ENCODE measurements at regions of chr2 and their contacts with region 1.

Region 1: DNA sequence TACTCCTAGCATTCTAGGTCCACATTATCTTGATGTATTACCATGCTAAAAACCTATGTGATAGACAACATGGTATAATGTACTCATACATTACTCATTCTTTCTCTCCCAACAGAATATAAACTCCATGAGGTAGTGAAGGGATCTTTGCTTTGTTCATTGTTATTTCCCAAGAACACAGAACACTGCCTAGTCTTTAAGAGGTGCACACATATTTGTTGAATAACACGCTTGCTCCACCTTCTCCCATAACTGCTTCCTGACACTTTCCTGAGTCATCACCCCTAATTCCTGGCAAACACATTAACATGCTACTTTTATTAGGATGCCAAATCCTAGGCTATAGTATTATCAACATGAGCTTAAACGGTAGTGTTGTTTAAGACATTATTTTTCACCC is 41.3 kb downstream of the REV1 start:
- DNase-seq: peak; percentile 81
- H3K4me3 ChIP-seq: no peak overlapping the region
- H3K27ac ChIP-seq: peak overlapping the region; percentile 13
- H3K4me1 ChIP-seq: peaks cover 12% of the 10 kb centered on the region
- H3K27me3 ChIP-seq: no peaks in the 10 kb centered on the region
- CTCF ChIP-seq: no peak
- POLR2A ChIP-seq: no peak

Region 2: GRCh38 chr2:99028558-99028957 is 420.0 kb before region 1 on chr2:
- CTCF ChIA-PET with region 1: no interaction called
- POLR2A ChIA-PET with region 1: no interaction called
- dilution Hi-C with region 1: no loop called
- intact Hi-C with region 1: no loop called
- DNase-seq: no peak
- H3K4me3 ChIP-seq: no peak overlapping the region
- H3K27ac ChIP-seq: no peak overlapping the region
- H3K4me1 ChIP-seq: no peaks in the 10 kb centered on the region
- H3K27me3 ChIP-seq: peaks cover 2% of the 10 kb centered on the region in 2 experiments
- CTCF ChIP-seq: no peak
- POLR2A ChIP-seq: no peak

Region 3: DNA sequence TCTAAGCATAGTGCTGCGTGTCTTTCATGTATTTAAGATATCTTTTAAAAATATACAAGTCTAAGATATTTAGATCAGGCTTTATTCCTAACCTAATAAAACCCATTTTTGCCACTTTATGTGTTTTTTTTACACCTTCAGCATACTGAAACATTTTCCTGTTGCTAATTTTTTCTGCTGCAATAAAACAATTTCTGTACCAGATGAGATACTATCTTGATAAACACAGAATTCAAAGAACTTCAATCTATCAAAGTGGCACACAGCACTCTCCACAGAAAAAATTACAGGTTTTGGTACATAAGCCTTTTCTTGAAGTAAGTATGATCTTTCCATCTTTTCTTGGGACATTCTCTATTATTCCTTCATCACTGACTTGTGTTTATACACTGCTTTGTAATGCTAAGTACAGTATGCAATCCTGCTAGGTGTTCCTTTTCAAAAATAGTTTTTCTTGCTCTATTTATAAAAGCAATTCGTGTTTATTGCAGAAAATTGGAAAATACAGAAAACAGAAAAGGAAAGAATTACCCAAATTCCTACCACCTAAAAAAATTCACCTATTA is 25.0 kb after region 1 on chr2:
- CTCF ChIA-PET with region 1: no interaction called
- POLR2A ChIA-PET with region 1: no interaction called
- dilution Hi-C with region 1: no loop called
- intact Hi-C with region 1: loop called (anchors 2 kb)
- DNase-seq: peak; percentile 36
- H3K4me3 ChIP-seq: no peak overlapping the region
- H3K27ac ChIP-seq: no peak overlapping the region
- H3K4me1 ChIP-seq: peaks cover 28% of the 10 kb centered on the region
- H3K27me3 ChIP-seq: no peaks in the 10 kb centered on the region
- CTCF ChIP-seq: no peak
- POLR2A ChIP-seq: no peak

Measured in endothelial cell of umbilical vein (primary cell).